Cardiac septum (tissue), 1 donor: ENCODE measurements at regions of chr4 and their contacts with region 1.

Region 1: GRCh38 chr4:15001869-15002658 is at the start of gene CPEB2:
- DNase-seq: peak; percentile 98
- total RNA-seq, gene CPEB2: 17.7 TPM

Region 2: DNA sequence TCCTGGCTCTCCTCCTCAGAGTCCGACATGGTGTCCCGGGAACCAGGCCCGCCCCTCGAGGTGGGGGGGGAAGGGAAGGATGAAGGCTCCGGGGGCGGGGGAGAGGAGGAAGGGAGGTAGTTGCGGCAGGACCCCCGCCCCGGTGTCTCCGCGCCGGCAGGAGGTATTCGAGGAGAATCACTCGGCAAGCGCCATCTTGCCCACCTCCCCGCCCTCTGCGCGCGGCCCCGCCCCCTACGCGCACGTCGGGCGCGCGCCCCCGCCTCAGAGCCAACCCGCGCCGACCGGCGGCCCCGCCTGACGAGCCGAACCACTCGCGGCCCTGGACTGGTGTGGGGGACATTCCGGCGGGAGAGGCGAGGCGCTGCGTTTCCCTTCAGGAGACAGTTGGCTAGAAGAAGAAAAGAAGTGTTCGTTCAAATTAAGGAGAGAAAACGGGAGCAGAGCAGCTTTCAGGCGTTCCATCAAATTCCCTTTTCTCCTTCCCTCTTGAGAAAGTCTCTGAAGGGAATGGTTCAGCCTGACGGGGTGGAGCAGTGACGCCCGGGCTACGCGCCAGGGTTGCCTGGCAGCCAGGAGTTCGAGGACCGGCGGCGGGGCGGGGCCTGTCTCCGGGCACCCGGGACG is 1517.8 kb before region 1 on chr4 and contains the start of gene RAB28:
- intact Hi-C with region 1: loop called (anchors 10 kb)
- DNase-seq: peak; percentile 98
- total RNA-seq, gene RAB28: 25.9 TPM

Region 3: GRCh38 chr4:14841801-14842768 is 160.0 kb before region 1 on chr4:
- intact Hi-C with region 1: loop called (anchors 5 kb)
- DNase-seq: peak; percentile 76

Region 4: GRCh38 chr4:14862891-14863290 is 139.2 kb before region 1 on chr4:
- intact Hi-C with region 1: loop called (anchors 5 kb)
- DNase-seq: no peak

Region 5: DNA sequence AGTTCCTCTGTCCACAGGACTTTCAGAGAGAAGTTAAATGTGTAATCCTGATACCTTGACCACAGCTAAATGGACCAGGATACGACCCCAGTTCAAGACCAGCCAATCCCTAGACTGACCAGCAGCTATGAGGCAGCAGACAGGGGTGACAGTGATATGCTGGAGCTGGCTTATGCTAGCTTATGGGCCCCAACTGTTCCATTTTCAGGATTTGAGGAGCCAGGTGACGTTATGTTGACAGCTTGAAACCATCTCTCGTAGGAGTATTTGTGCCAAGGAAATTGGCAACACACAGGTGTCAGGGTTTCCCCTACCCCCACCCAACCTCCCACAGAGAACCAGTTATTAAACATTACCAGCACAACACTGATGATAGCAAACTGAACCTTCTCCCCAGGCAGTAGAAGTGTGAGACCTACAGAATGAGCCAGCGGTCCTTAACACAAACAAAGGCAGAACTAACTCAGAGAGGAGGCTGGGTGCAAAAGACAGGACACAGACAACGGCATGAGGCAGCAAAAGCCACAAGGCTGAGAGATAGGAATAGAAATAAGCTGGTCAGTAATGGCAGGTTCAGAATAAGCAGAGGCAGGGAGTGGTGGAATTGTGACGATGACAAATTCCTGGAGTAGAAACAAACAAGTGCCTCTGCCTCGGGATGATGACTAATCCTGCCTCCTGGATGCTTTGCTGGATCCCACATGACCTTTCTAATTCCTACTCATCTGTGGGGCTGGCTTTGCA is 85.3 kb before region 1 on chr4:
- intact Hi-C with region 1: loop called (anchors 2 kb)
- DNase-seq: no peak

Region 6: DNA sequence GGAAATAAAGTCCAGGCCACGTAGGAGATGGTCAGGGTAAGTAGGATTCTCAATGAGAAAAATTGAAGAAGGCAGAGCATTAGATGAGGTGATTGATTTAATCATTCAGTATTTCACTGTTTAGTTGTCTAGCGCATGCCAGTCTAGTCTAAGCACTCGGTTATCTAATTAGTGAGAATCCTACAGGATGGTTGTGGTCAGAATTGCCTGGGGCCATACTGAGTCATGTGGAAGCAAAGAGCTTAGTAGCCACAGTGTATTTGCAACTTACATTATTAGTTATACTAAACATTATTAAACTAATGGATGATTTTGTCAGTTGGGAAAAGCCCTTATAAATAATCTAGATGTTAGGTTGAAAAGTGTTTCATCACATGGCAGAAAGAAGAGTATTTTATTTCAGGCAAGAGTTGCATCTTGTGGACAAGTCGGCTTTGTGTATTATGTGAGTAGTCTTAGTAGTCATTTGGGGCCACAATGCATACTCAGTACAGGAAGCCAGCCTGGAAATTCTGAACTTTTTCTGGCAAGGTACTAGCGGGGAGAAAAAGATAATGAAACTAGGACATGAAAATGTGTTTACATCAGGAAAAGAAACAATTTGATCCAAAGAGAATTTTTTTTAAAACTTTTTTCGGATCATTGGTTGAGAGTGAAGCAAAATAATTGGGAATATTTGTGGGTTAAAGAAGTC is 32.2 kb after region 1 on chr4:
- intact Hi-C with region 1: no loop called
- DNase-seq: no peak

Region 7: DNA sequence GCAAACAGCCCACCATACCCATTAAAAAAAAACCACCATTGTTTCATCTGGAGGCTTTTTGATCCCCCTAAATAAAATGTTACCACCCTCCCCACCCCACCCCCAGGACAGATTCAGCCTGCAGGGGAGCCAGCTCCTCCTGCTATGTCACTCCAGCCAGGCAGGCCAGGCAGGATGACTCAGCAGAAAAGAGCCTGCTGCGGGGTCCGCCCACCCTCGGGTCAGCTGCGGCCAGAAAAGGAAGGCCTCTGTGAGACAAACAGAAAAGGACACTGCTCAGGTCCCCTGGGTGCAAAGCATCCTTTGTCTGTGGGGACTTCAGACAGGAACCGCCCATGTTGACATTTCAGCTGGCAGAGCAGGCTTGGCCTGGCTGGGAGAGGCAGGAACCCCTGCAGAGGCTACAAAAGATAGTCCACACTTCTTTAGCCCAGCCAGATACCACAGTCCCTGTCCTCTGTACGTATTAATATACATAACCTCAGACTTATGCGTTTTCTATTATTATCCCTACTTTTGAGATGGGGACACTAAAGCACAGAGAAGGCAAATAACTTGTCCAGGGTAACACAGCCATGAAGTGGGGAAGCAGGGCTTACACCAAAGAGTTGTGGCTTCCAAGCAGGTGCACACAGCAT is 147.9 kb after region 1 on chr4:
- intact Hi-C with region 1: loop called (anchors 5 kb)
- DNase-seq: peak; percentile 94

Region 8: DNA sequence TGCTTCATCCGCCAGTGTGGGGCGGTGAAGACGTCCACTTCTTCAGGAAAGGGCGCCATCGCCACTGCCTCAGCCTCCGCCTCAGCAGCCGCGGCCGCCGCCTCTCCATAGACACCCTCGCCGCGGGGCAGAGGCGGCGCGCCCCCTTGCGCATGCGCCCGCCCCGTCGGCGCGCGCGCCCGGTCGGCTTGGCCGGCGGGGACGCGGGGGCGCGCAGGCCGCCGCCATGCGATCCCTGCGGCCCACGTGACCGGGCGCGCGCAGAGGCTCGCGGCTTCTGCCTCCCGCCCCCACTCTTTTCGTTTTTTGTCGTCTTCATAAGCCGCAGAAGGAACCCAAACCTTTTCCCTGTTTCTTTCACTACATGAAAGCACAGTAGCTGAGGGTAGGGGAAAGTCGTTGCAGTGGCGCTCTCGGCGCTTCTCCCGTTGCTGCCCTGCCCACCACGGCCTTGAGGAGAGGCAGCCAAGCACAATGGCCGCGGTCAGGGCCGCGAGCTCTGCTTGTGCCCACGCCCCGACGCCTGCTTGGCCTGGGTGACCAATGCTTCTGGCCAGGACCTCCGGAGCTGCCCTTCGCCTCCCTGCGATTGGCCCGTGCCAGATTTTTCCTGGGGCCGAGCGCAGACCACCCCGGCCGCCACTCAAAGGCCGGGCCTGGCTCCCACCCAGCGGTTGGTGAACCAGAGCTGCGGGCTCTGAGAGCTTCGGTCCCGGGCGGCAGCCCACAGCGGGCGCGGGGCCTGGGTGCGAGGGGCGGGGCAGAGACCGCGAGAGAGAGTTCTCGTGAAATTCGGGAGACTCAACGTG is 653.4 kb after region 1 on chr4 and contains the start of gene FBXL5:
- intact Hi-C with region 1: loop called (anchors 10 kb)
- DNase-seq: peak; percentile 92
- total RNA-seq, gene FBXL5: 60.9 TPM